WTC11 (cell line): ENCODE measurements at regions of chr2 and their contacts with region 1.

Region 1: DNA sequence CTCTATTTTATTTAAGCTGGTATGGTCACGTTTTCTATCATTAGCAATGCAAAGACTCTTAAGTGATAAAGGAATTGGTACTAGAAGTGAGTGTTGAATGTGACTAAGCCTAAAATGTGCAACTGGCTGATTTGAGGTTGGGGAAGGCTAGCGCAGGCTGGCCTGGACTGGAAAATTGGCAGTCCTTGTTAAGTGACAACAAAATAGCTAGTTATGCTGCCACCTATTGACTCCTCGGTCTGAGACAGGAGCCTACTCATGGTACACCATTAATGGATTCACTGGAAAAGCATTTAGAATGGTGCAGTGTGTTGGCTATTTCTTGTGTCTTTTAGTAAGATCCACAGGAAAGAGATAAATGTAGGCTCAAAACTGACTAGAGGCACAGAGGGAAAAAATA is 5.7 kb upstream of the WIPF1 start:
- DNase-seq: peak; percentile 28
- ATAC-seq: peak; percentile 85
- H3K4me3 Mint-ChIP-seq: no peak overlapping the region
- H3K27ac Mint-ChIP-seq: no peak overlapping the region
- H3K4me1 Mint-ChIP-seq: no peaks in the 10 kb centered on the region
- H3K27me3 Mint-ChIP-seq: no peaks in the 10 kb centered on the region
- CTCF ChIP-seq: no peak

Region 2: DNA sequence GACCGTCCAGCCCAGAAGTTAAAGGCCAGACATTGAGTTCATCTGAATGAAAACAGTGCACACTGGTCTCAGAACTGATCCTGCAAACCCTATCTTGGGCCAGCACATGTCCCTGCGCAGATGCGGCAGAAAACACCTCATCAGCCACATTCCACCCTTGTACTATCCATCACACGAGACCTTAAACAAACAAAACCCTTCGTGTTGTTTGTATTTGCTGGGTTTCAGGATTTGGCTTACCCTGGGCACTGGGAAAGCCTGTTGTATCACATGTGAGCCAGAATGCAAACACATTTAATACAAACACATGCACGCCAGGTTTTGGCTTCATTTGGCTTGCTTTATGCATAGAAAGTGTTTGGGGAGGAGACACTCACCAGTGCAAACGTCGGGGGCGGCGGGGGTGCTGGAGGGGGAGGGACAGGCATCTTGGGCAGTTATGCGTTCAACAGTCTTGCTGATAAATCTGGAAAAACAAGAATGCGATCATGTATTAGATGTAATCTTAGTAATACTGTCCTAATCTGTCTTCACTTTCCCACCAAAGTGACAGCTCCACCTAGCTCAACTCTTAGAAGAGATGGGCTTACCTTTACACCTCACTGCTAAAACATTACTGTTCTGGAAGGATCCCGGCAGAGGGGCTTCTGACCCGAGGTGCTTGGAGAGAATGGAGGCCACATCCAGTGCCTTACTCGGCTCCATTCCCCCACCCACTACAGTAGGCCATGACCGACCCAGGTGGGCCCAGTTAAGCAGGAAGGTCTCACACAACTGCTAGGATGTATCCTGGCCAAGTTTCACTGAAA is 17.9 kb before region 1 on chr2:
- CTCF ChIA-PET with region 1: interaction called, 11 read pairs
- POLR2A ChIA-PET with region 1: no interaction called
- DNase-seq: no peak
- ATAC-seq: peak; percentile 57; the same call in 1 of the 2 replicates
- H3K4me3 Mint-ChIP-seq: peak overlapping the region; percentile 18; the same call in 1 of the 2 replicates
- H3K27ac Mint-ChIP-seq: peak overlapping the region; percentile 70
- H3K4me1 Mint-ChIP-seq: peaks cover 27% of the 10 kb centered on the region
- H3K27me3 Mint-ChIP-seq: no peaks in the 10 kb centered on the region
- CTCF ChIP-seq: no peak

Region 3: DNA sequence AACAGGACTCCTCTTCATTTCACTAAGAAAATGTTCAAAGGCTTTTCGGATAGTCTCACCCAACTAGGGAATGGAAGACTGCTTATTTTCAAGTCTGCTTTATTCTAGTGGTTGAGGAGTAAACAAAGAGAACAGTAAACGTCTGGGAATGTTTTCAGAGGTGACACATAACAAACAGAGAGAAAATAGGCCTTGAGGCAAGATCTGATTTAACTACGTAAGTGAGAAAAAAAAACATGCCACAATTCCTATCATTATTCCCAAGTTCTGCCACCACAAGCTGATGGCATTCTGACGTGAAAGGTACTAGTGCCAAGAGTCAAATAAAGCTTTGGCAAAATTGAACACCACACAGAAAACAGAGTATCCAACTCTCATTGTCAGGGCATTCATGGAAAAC is 11.0 kb after region 1 on chr2:
- CTCF ChIA-PET with region 1: interaction called, 14 read pairs
- POLR2A ChIA-PET with region 1: no interaction called
- DNase-seq: no peak
- ATAC-seq: no peak
- H3K4me3 Mint-ChIP-seq: no peak overlapping the region
- H3K27ac Mint-ChIP-seq: no peak overlapping the region
- H3K4me1 Mint-ChIP-seq: 0 out of 2 replicates have a peak, but pooled peaks cover 2% of the 10 kb centered on the region
- H3K27me3 Mint-ChIP-seq: no peaks in the 10 kb centered on the region
- CTCF ChIP-seq: no peak

Region 4: DNA sequence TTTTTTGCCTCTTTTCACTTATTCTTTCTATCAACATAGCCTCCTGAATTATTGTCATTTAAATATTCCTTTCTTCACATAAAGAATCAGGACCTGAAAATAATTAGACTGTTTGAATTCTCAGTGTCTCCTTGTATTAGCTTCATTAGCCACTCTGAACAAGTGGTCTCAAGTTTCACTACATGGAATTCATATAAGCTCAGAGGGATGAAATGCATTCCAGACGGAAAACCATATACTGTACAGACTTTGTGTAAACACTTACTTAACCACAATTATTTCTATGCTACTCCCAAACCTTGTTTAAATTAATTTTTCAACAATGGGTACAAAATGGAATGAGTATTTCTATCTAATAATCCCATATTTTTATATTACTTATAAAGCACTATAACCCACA is 348.5 kb after region 1 on chr2:
- CTCF ChIA-PET with region 1: no interaction called
- POLR2A ChIA-PET with region 1: no interaction called
- DNase-seq: no peak
- ATAC-seq: no peak
- H3K4me3 Mint-ChIP-seq: no peak overlapping the region
- H3K27ac Mint-ChIP-seq: no peak overlapping the region
- H3K4me1 Mint-ChIP-seq: peaks cover 33% of the 10 kb centered on the region
- H3K27me3 Mint-ChIP-seq: no peaks in the 10 kb centered on the region
- CTCF ChIP-seq: no peak